ENCODE measurements at regions of chr14 and their contacts with region 1.

Region 1: DNA sequence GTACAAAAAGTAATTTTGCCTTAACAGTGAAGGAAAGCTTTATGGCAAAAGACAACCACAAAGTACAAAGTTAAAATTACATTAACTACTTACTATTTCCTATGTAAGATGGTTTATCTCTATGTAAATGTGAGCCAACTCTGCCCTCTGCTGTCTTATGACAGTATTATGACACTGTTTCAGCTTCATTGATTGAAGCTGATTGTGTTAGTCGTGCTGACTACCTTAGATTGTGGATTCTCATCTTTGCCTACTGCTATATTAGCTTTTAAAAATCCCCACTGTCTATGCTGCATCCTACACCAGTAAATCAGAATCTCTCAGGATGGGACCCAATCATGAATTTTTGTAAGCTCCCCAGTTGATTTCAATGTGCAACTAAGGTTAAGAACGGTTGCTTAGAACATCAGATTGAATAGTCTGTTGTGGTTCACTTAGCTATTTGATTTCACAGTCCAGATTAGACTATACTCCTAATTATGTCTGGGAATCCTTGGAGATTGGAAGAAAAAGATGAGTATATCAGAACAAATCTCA is 12.2 kb upstream of the SPTB start:
- H3K4me3 ChIP-seq: no peak overlapping the region
- H3K27ac ChIP-seq: no peak overlapping the region
- H3K4me1 ChIP-seq: no peaks in the 10 kb centered on the region
- CTCF ChIP-seq: peak; percentile 44; the same call in 1 of the 2 replicates

Region 2: DNA sequence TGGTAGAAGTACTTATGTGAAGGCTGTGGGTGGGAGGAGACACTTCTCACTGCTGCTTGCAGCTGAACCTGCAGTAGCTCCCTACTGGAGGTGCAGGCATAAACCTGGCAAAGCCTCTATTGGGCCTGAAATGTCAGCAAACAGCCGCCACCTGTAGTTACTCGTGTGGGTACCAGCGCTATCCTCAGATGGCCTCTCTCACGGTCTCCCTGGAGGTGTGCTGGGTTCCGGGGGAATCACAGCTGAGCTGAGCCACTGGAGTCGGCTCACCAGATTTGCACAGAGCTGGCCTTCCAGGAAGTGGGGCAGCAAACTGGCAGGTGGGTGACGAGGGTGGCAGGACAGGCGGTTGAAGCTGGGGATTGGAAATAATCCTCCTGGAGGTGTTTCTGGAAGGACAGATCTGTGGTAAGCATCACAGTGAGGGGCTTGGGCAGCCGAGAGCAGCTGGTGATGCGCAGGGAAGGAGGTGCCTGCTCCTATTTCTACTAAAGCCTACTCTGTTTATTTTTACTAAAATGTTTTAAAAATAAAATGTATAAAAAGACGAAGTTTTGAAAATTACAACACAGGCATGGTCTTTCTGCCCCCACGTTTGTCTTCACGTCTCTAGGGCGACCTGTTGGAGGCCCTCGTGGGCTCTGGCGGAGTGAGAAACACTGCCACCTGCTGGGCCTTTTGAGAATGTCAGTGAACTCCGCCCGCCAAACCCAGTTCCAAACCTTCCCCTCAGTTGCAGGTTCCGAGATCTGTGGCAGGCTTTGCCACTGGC is 255.5 kb before region 1 on chr14:
- CTCF ChIA-PET with region 1: interaction called, 11 read pairs
- POLR2A ChIA-PET with region 1: no interaction called
- H3K4me3 ChIP-seq: no peak overlapping the region
- H3K27ac ChIP-seq: no peak overlapping the region
- H3K4me1 ChIP-seq: no peaks in the 10 kb centered on the region
- CTCF ChIP-seq: peak; percentile 57

Region 3: DNA sequence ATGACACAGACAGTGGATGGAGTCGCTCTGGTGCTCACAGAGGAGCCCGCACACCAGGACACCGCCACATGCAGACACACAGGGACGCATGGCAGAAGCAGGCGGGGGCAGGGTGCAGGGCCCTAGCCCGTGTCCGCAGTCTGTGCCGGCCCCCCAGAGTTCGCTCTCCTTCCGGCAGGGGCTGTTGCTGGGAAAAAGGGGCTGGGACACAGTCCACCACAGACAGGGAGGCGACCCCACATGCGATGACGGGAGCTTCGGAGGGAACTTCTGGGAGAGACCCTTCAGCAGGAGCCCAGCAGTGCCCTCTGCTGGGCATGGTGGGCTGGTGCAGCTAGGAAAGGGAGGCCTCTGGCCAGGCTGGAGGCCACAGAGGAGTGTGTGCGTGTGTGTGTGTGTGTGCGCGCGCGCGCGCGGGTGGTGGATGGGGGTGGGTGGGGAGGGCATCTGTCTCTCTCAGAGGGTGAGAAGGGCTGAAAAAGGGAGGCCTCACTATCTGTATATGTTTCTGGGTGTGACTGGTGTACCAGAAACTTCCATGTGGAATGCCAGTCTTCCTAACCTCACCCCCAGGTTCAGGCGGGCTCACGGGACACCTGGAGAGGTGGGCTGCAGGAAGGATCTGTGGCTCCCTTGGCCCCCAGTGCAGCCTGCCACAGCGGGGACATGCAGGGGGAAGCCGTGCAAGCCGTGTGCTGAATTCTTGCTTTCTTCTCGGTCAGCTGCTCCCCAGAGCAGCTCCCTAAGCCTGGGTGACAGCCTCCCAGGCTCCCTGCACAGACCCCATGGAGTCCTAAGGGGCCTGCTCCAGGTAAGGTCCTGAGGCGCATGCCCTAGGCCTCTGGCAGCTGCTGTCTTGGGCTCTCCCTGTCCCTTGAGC is 127.0 kb before region 1 on chr14:
- CTCF ChIA-PET with region 1: interaction called, 55 read pairs
- POLR2A ChIA-PET with region 1: interaction called, 4 read pairs
- H3K4me3 ChIP-seq: no peak overlapping the region
- H3K27ac ChIP-seq: 0 out of 2 replicates have a peak overlapping the region, but pooled peaks have one; percentile 7
- H3K4me1 ChIP-seq: peaks cover 18% of the 10 kb centered on the region
- CTCF ChIP-seq: peak; percentile 77

Region 4: GRCh38 chr14:64806202-64806860 is 85.6 kb before region 1 on chr14:
- CTCF ChIA-PET with region 1: interaction called, 94 read pairs
- POLR2A ChIA-PET with region 1: no interaction called
- H3K4me3 ChIP-seq: no peak overlapping the region
- H3K27ac ChIP-seq: no peak overlapping the region
- H3K4me1 ChIP-seq: peaks cover 2% of the 10 kb centered on the region
- CTCF ChIP-seq: no peak

Region 5: DNA sequence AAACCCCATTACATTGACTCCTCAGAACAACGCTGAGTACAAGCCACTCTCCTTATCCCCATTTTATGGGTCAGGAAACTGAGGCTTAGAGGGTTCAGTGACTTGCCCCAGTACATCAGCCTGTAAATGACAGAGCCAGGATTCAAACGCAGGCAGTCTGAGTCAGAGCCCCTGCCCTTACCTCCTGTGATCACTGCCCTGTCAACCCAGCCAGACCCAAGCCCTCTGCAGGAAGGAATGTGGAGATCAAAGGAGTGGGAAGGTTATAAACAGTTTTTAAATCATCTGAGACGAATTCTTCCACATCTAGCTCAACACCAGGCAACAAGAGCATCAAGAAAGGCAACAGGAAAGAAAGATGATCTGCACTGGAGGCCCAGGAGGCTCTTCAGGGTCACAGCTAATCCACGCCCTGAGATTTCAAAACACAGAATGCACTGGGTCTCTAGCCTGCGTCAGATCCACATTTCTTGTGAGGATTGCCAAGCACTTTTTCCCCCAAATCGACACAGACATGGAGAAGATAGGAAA is 50.7 kb before region 1 on chr14:
- CTCF ChIA-PET with region 1: interaction called, 17 read pairs
- POLR2A ChIA-PET with region 1: no interaction called
- H3K4me3 ChIP-seq: no peak overlapping the region
- H3K27ac ChIP-seq: no peak overlapping the region
- H3K4me1 ChIP-seq: no peaks in the 10 kb centered on the region
- CTCF ChIP-seq: no peak

Region 6: GRCh38 chr14:64979336-64980074 is 87.6 kb after region 1 on chr14:
- CTCF ChIA-PET with region 1: interaction called, 18 read pairs
- POLR2A ChIA-PET with region 1: no interaction called
- H3K4me3 ChIP-seq: no peak overlapping the region
- H3K27ac ChIP-seq: no peak overlapping the region
- H3K4me1 ChIP-seq: no peaks in the 10 kb centered on the region
- CTCF ChIP-seq: no peak

Measured in HEK293 (cell line).